ENCODE measurements at regions of chr7 and their contacts with region 1.

Region 1: GRCh38 chr7:42690794-42691639 is 220.9 kb downstream of the C7orf25 start:
- DNase-seq: peak in 1 of 2 experiments; percentile 7
- H3K4me3 ChIP-seq: no peak overlapping the region
- H3K27ac ChIP-seq: no peak overlapping the region
- H3K4me1 ChIP-seq: no peaks in the 10 kb centered on the region
- H3K27me3 ChIP-seq: peaks cover 59% of the 10 kb centered on the region
- CTCF ChIP-seq: peak; percentile 56

Region 2: GRCh38 chr7:42345478-42346299 is 345.3 kb before region 1 on chr7:
- CTCF ChIA-PET with region 1: no interaction called
- POLR2A ChIA-PET with region 1: interaction called, 16 read pairs
- intact Hi-C with region 1: no loop called
- DNase-seq: no peak
- H3K4me3 ChIP-seq: no peak overlapping the region
- H3K27ac ChIP-seq: no peak overlapping the region
- H3K4me1 ChIP-seq: no peaks in the 10 kb centered on the region
- H3K27me3 ChIP-seq: peaks cover 55% of the 10 kb centered on the region
- CTCF ChIP-seq: no peak

Region 3: GRCh38 chr7:42380401-42380800 is 310.6 kb before region 1 on chr7:
- CTCF ChIA-PET with region 1: no interaction called
- POLR2A ChIA-PET with region 1: no interaction called
- intact Hi-C with region 1: no loop called
- DNase-seq: no peak
- H3K4me3 ChIP-seq: no peak overlapping the region
- H3K27ac ChIP-seq: no peak overlapping the region
- H3K4me1 ChIP-seq: no peaks in the 10 kb centered on the region
- H3K27me3 ChIP-seq: no peaks in the 10 kb centered on the region
- CTCF ChIP-seq: no peak

Region 4: DNA sequence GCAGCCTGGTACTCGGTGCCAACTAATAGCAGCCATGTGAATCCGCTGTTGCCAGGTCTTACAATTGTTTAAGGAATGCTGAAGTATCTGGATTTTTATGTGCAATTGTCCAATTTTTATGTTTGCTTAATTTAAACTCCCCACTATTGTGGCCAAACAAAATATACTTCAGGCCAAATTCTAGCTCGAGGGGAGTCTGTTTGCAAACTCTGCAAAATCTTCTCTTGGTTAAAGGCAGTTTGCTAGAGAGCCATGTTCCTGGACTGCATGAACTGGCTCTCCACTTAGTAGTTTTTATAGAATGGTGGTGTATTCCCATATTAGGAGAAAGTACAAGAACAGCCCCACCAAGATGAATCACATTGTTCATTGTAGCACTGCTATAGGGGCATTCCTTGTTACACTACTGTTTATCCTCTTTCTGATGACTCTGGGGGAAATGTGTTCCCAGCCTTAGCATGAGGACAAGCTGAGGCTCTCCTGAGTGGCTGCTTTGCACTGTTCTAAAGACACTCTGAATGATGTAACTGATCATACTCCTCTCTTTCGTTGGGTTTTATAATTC is 276.0 kb before region 1 on chr7:
- CTCF ChIA-PET with region 1: no interaction called
- POLR2A ChIA-PET with region 1: no interaction called
- intact Hi-C with region 1: no loop called
- DNase-seq: no peak
- H3K4me3 ChIP-seq: no peak overlapping the region
- H3K27ac ChIP-seq: no peak overlapping the region
- H3K4me1 ChIP-seq: no peaks in the 10 kb centered on the region
- H3K27me3 ChIP-seq: peaks cover 7% of the 10 kb centered on the region
- CTCF ChIP-seq: no peak